ENCODE measurements at regions of chr11 and their contacts with region 1.

Region 1: DNA sequence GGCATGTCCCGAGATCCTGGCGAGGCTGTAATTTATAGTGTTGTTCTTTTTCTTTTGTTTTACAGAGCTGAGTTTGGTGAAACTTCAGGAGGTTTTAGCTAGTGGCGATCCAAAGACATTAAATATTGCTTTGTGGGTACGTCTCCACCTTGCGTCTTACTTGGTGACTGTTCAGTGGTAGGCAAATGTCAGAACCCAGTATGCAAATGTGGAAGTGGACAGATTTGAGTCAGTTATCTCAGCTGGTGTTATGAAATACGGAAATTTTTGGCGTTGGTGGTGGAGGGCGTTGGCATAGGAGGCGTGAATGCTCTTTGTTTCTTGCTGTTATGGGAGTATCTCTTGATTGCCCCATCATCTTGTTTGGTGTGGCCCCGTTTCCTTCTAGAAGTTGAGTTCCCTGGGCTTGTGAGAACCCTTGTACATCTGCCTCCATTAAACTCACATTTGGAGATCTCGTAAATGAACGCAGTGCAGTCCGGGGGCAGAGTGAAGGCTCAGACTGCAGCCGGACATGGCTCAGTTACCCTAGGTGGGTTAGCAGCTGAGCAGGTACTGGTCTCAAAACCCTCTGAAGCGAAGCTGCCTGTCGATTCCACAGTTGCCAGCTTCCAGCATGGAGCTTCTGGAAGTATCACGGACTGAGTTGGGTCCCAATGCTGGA is 39.9 kb downstream of the PTPRJ start:
- DNase-seq: peak; percentile 59
- ATAC-seq: peak; percentile 59
- H3K4me3 Mint-ChIP-seq: peak overlapping the region; percentile 13
- H3K27ac Mint-ChIP-seq: peak overlapping the region; percentile 76
- H3K4me1 Mint-ChIP-seq: peaks cover 72% of the 10 kb centered on the region
- H3K27me3 Mint-ChIP-seq: no peaks in the 10 kb centered on the region

Region 2: GRCh38 chr11:48008951-48009270 is 11.3 kb before region 1 on chr11:
- CTCF ChIA-PET with region 1: interaction called, 11 read pairs
- POLR2A ChIA-PET with region 1: interaction called, 8 read pairs
- intact Hi-C with region 1: loop called (anchors 1 kb)
- DNase-seq: peak; percentile 87
- ATAC-seq: peak; percentile 48
- H3K4me3 Mint-ChIP-seq: peak overlapping the region; percentile 37
- H3K27ac Mint-ChIP-seq: peak overlapping the region; percentile 82
- H3K4me1 Mint-ChIP-seq: peaks cover 91% of the 10 kb centered on the region
- H3K27me3 Mint-ChIP-seq: no peaks in the 10 kb centered on the region

Region 3: DNA sequence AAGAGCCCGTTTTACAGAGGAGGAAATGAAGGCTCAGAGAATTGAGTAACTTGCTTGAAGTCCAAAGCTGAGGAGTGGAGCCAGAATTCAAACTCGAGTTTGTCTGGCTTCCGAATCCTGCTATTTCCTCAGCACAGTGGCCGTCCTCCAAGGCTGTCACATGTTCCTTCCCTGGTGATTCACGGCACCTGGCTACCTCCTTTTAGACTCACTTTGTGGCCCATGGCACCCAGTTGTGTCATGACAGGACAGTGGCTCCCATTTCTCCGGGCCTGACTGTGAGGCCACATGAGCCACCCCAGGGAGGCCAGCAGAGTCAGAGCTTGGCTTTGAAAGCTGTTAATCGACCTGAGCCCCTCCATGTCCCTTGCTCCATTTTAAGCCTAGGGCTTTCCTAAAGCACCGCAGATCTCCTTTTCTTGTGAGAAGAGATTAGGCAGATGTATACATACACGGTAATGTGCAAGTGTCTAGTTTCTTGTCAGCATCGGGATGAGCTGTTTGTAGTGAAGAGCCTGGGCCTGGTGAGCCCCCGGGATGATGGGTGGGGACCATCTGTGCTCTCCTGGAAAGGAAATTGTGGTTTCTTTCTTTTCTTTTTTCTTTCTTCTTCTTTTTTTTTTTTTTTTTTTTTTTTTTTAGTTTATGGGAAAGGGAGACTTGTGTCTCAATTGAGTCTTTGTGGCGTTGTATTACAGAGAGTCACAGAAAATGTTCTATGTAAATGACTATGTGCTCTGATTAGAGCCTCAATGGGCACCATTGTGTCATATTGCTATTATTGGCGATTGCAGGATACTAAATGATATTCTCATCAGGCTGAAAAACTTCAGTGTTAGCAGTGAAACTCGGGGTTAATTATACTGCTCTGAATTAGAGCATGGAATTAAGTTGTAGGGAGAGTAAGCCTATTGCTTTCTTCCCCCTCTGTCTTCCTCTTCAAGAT is 15.0 kb after region 1 on chr11:
- CTCF ChIA-PET with region 1: interaction called, 11 read pairs
- POLR2A ChIA-PET with region 1: no interaction called
- intact Hi-C with region 1: no loop called
- DNase-seq: no peak
- ATAC-seq: peak; percentile 40
- H3K4me3 Mint-ChIP-seq: no peak overlapping the region
- H3K27ac Mint-ChIP-seq: peak overlapping the region; percentile 6
- H3K4me1 Mint-ChIP-seq: peaks cover 65% of the 10 kb centered on the region
- H3K27me3 Mint-ChIP-seq: no peaks in the 10 kb centered on the region

Region 4: GRCh38 chr11:48047616-48048015 is 27.4 kb after region 1 on chr11:
- CTCF ChIA-PET with region 1: interaction called, 4 read pairs
- POLR2A ChIA-PET with region 1: no interaction called
- intact Hi-C with region 1: loop called in 1 of 2 experiments (anchors 2 kb)
- DNase-seq: no peak
- ATAC-seq: no peak
- H3K4me3 Mint-ChIP-seq: no peak overlapping the region
- H3K27ac Mint-ChIP-seq: no peak overlapping the region
- H3K4me1 Mint-ChIP-seq: peaks cover 68% of the 10 kb centered on the region
- H3K27me3 Mint-ChIP-seq: no peaks in the 10 kb centered on the region

Region 5: GRCh38 chr11:48055292-48056132 is 35.3 kb after region 1 on chr11:
- CTCF ChIA-PET with region 1: interaction called, 13 read pairs
- POLR2A ChIA-PET with region 1: interaction called, 4 read pairs
- intact Hi-C with region 1: loop called in 1 of 2 experiments (anchors 2 kb)
- DNase-seq: peak; percentile 80
- ATAC-seq: peak; percentile 93
- H3K4me3 Mint-ChIP-seq: peak overlapping the region; percentile 55
- H3K27ac Mint-ChIP-seq: peak overlapping the region; percentile 89
- H3K4me1 Mint-ChIP-seq: peaks cover 84% of the 10 kb centered on the region
- H3K27me3 Mint-ChIP-seq: no peaks in the 10 kb centered on the region

Region 6: DNA sequence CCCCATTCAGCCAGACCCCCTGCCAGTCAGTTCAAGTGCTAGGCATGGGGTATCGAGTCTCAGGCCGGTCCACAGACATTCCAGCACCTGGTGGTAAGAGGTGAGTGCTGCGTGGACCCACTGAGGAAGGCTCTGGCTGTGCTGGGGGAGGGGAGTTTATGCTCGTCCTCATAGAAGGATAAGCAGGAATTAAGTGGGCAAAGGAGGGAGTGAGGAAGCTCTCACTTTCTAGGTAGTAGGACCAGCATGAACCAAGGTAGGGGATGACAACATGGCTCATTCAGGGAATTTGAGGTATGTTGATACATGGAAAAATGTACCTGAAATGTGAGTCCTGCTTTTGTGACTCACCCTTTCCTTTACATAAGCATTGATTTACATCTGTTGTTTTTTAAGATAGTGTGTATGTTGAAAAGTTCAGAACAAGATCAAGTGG is 76.8 kb after region 1 on chr11:
- CTCF ChIA-PET with region 1: no interaction called
- POLR2A ChIA-PET with region 1: no interaction called
- intact Hi-C with region 1: no loop called
- DNase-seq: no peak
- ATAC-seq: peak; percentile 47
- H3K4me3 Mint-ChIP-seq: no peak overlapping the region
- H3K27ac Mint-ChIP-seq: peak overlapping the region; percentile 79
- H3K4me1 Mint-ChIP-seq: peaks cover 65% of the 10 kb centered on the region
- H3K27me3 Mint-ChIP-seq: no peaks in the 10 kb centered on the region

Measured in activated CD4-positive, alpha-beta T cell treated with anti-CD3 and anti-CD28 coated beads for 36 hours (primary cell).